ENCODE measurements at regions of chr2 and their contacts with region 1.

Region 1: DNA sequence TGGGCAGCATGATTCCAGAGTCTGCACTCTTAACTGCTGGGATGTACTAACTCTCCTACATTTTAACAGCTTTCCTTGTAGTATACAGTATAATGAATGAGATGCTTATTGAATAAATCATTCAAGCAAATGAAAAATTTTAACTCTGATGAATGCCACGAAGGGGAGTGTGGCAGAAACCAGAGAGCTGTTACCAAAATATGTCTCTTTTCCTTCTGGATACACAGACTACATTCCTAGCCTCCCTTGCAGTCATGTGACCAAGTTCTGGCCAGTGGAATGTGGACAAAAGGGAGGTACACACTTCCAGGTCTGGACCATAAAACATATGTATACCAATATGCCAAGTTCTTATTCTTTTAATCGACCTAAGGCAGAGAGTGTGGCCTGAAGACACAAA is 1.7 kb upstream of the EML4 start:
- DNase-seq: no peak
- H3K4me3 ChIP-seq: no peak overlapping the region
- H3K27ac ChIP-seq: no peak overlapping the region
- H3K4me1 ChIP-seq: peaks cover 2% of the 10 kb centered on the region
- H3K27me3 ChIP-seq: no peaks in the 10 kb centered on the region
- CTCF ChIP-seq: no peak
- EP300 ChIP-seq: no peak
- POLR2A ChIP-seq: no peak

Region 2: GRCh38 chr2:42203792-42204191 is 36.3 kb after region 1 on chr2:
- intact Hi-C with region 1: loop called in 1 of 4 experiments (anchors 2 kb)
- DNase-seq: no peak
- H3K4me3 ChIP-seq: no peak overlapping the region
- H3K27ac ChIP-seq: no peak overlapping the region
- H3K4me1 ChIP-seq: peaks cover 3% of the 10 kb centered on the region
- H3K27me3 ChIP-seq: no peaks in the 10 kb centered on the region
- CTCF ChIP-seq: no peak
- EP300 ChIP-seq: no peak
- POLR2A ChIP-seq: no peak

Measured in ovary (tissue), 10 donors.